AG04449 (cell line): ENCODE measurements at regions of chr16 and their contacts with region 1.

Region 1: DNA sequence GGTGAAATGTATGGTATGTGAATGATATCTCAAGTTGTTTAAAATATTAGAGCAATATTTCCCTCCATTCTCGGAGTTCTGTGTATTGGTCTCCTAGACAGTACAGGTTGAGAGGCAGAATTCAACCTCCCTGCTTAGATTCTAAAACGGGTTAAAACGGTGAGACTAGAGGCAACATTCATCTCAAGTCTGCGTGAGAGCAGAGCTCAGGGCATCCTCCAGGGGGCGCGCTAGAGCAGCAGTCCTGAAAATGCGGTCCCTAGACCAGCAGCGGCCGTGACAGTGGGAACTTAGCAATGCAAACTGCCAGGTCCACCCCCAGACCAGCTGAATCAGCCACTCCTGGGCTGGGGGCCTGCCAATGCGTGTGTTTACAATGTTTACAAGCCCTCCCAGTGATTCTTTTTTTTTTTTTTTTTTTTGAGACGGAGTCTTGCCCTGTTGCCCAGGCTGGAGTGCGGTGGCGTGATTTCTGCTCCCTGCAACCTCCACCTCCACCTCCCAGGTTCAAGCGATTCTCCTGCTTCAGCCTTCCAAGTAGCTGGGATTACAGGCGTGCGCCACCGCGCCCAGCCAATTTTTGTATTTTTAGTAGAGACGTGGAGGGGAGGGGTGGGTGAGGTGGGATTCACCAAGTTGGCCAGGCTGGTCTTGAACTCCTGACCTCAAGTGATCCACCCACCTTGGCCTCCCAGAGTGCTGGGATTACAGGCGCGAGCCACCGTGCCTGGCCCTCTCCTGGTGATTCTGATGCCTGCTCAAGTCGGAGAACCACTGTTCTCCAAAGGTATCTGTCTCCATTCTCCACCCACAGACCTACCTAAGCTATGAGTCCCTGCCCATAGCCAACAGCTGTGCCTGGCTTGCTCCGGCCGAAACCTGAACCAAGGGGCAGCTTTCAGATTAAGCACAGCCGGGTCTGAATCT is 24.2 kb downstream of the KLHL36 start:
- DNase-seq: no peak
- H3K4me3 ChIP-seq: no peak overlapping the region
- CTCF ChIP-seq: peak; percentile 89

Region 2: GRCh38 chr16:84511180-84511824 is 161.2 kb before region 1 on chr16:
- CTCF ChIA-PET with region 1: interaction called, 11 read pairs
- POLR2A ChIA-PET with region 1: no interaction called
- DNase-seq: peak; percentile 36
- H3K4me3 ChIP-seq: no peak overlapping the region
- CTCF ChIP-seq: peak; percentile 85

Region 3: DNA sequence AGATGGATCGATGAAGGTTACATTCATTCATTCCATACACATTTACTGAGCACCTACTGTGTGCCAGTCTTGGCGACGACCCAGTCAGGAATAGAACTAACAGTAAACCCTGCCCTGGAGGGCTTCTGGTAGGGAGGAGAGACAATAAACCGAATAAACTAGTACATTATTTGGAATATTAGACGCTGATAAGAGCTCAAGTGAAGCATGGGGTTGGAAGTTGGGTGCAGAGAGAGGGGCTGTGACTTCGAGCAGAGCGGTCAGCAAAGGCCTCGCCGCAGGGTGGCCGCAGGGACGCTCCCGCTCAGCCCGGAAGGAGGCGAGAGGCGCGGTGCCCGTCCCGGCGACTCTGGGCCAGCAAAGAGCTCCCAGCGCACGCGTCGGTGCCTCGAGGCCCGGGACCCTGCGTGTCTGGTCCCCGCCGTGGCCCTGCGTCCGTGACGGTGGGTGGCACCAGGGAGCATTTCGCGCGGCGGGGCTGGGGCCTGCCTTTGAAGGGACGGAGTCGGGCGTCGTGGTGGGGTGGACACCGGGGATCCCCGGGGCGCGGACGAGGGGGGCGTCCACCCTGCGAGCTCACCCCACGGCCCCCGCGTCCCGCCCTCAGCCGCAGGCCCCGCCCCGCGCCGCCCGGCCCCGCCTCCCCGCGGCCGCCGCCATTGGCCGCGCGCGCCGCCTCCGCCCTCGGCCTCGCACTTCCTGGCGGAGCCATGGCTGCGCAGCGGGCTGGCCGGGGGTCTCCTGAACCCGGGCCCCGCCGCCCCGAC is 24.5 kb before region 1 on chr16 and contains the start of gene KLHL36:
- CTCF ChIA-PET with region 1: interaction called, 23 read pairs
- POLR2A ChIA-PET with region 1: no interaction called
- DNase-seq: no peak
- H3K4me3 ChIP-seq: peak within 1 kb of the TSS; percentile 68
- CTCF ChIP-seq: no peak

Region 4: DNA sequence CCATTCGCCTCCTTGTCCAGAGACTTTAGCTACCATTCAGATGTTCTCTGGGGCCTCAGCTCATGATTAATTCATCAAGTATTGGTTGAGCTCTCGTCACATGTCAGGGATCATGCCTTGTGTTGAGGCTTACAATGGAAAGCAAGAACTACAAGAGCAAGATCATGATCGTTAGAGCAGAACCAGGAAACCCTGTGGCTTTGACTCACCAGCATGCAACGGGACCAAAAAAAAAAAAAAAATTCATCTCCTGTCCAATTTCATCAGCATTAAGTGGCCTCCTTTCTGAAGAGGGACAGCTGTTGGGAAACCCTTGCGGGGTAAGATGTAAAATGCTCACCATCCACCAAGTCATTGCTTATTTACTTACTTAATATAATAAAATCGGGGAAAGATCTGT is 15.2 kb after region 1 on chr16:
- CTCF ChIA-PET with region 1: interaction called, 123 read pairs
- POLR2A ChIA-PET with region 1: interaction called, 3 read pairs
- DNase-seq: peak; percentile 78
- H3K4me3 ChIP-seq: no peak overlapping the region
- CTCF ChIP-seq: no peak

Region 5: GRCh38 chr16:84699712-84700445 is 27.3 kb after region 1 on chr16 and contains the start of gene USP10:
- CTCF ChIA-PET with region 1: interaction called, 39 read pairs
- POLR2A ChIA-PET with region 1: no interaction called
- DNase-seq: no peak
- H3K4me3 ChIP-seq: peak within 1 kb of the TSS; percentile 77
- CTCF ChIP-seq: no peak